ENCODE measurements at regions of chr10 and their contacts with region 1.

Region 1: GRCh38 chr10:59465088-59465487 is 102.7 kb upstream of the FAM13C start:
- DNase-seq: no peak
- H3K4me3 ChIP-seq: no peak overlapping the region
- CTCF ChIP-seq: peak; percentile 14

Region 2: GRCh38 chr10:59234816-59235429 is 230.2 kb before region 1 on chr10:
- CTCF ChIA-PET with region 1: interaction called, 27 read pairs
- POLR2A ChIA-PET with region 1: no interaction called
- DNase-seq: no peak
- H3K4me3 ChIP-seq: no peak overlapping the region
- CTCF ChIP-seq: peak; percentile 58

Region 3: GRCh38 chr10:59240582-59241183 is 224.4 kb before region 1 on chr10:
- CTCF ChIA-PET with region 1: interaction called, 27 read pairs
- POLR2A ChIA-PET with region 1: no interaction called
- DNase-seq: no peak
- H3K4me3 ChIP-seq: no peak overlapping the region
- CTCF ChIP-seq: peak; percentile 31

Region 4: GRCh38 chr10:59524348-59524747 is 59.3 kb after region 1 on chr10:
- CTCF ChIA-PET with region 1: no interaction called
- POLR2A ChIA-PET with region 1: no interaction called
- DNase-seq: no peak
- H3K4me3 ChIP-seq: no peak overlapping the region
- CTCF ChIP-seq: no peak

Region 5: DNA sequence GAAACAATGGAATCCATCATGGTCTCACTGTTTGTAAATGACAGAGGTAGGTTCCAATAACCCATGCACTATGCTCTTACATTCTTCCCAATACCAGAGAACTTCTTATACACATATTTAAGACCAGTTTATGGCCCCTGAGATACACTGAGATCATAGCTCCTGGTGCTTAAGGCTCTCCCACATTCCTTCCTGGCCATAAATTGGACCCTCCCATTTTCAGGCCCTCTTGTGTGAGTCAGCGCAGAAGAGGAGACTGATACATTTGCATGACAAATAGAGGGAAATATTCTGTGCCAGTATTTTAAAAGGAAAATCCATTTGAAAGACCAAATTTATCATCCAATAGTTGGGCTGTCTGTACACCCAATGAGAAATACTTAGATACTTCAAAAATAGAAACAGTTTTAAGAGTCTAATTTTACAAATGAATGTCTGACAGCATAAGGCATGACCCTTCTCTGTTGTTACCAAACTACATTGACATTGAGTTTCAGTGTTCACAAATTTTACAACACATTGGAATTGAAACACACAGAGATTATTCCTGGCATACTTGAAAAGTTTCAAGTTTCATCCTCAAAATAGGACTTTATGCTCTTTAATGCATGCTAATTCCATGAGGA is 209.2 kb after region 1 on chr10:
- CTCF ChIA-PET with region 1: no interaction called
- POLR2A ChIA-PET with region 1: no interaction called
- DNase-seq: peak; percentile 3
- H3K4me3 ChIP-seq: no peak overlapping the region
- CTCF ChIP-seq: no peak

Measured in AG04449 (cell line).